H1 (cell line): ENCODE measurements at regions of chr2 and their contacts with region 1.

Region 1: GRCh38 chr2:13006829-13007717 is 290.3 kb downstream of the TRIB2 start:
- DNase-seq: peak; percentile 29 to 81
- H3K4me3 ChIP-seq: 0 out of 8 replicates have a peak overlapping the region, but pooled peaks of 1 of the 4 experiments have one; percentile 2
- H3K27ac ChIP-seq: no peak overlapping the region
- H3K4me1 ChIP-seq: peaks cover 0 to 5% (median 0%) of the 10 kb centered on the region in 4 experiments; a peak in 1 of 7 replicates
- H3K27me3 ChIP-seq: no peaks in the 10 kb centered on the region
- CTCF ChIP-seq: peak; percentile 40 to 86 (median 75)
- EP300 ChIP-seq: no peak
- POLR2A ChIP-seq: no peak
- RAD21 ChIP-seq: peak; percentile 95 to 96

Region 2: GRCh38 chr2:11829947-11830707 is 1176.9 kb before region 1 on chr2:
- CTCF ChIA-PET with region 1: interaction called, 18 read pairs
- POLR2A ChIA-PET with region 1: no interaction called
- DNase-seq: peak; percentile 73 to 78
- H3K4me3 ChIP-seq: peak overlapping the region in 1 of 4 experiments; percentile 33; a peak in 2 of 8 replicates
- H3K27ac ChIP-seq: peak overlapping the region; percentile 48; the same call in 1 of the 2 replicates
- H3K4me1 ChIP-seq: peaks cover 4 to 15% (median 8%) of the 10 kb centered on the region in 4 experiments; a peak in 6 of 7 replicates
- H3K27me3 ChIP-seq: no peaks in the 10 kb centered on the region
- CTCF ChIP-seq: peak; percentile 35 to 60 (median 56)
- EP300 ChIP-seq: no peak
- POLR2A ChIP-seq: 0 out of 3 replicates have a peak, but pooled peaks of 1 of the 2 experiments have one; percentile 19
- RAD21 ChIP-seq: peak; percentile 75 to 87

Region 3: GRCh38 chr2:12716282-12717190 is 290.5 kb before region 1 on chr2 and contains the start of gene TRIB2:
- CTCF ChIA-PET with region 1: interaction called, 16 read pairs
- POLR2A ChIA-PET with region 1: no interaction called
- DNase-seq: peak in 1 of 2 experiments; percentile 79
- H3K4me3 ChIP-seq: peak within 1 kb of the TSS; percentile 74 to 95 (median 83)
- H3K27ac ChIP-seq: peak within 1 kb of the TSS; percentile 70; the same call in 1 of the 2 replicates
- H3K4me1 ChIP-seq: peaks cover 2 to 12% (median 5%) of the 10 kb centered on the region in 4 experiments; a peak in 6 of 7 replicates
- H3K27me3 ChIP-seq: no peaks in the 10 kb centered on the region
- CTCF ChIP-seq: peak in 1 of 3 experiments; percentile 26; a peak in 1 of 4 replicates
- EP300 ChIP-seq: no peak
- POLR2A ChIP-seq: 0 out of 3 replicates have a peak, but pooled peaks of 1 of the 2 experiments have one; percentile 29
- RAD21 ChIP-seq: peak in 1 of 2 experiments; percentile 43; a peak in 1 of 4 replicates
- total RNA-seq, gene TRIB2: 57.0 and 57.3 TPM in 2 replicates

Region 4: GRCh38 chr2:12741380-12741779 is 265.7 kb before region 1 on chr2:
- CTCF ChIA-PET with region 1: interaction called, 10 read pairs
- POLR2A ChIA-PET with region 1: no interaction called
- DNase-seq: no peak
- H3K4me3 ChIP-seq: no peak overlapping the region
- H3K27ac ChIP-seq: no peak overlapping the region
- H3K4me1 ChIP-seq: no peaks in the 10 kb centered on the region
- H3K27me3 ChIP-seq: no peaks in the 10 kb centered on the region
- CTCF ChIP-seq: no peak
- EP300 ChIP-seq: no peak
- POLR2A ChIP-seq: no peak
- RAD21 ChIP-seq: no peak

Region 5: DNA sequence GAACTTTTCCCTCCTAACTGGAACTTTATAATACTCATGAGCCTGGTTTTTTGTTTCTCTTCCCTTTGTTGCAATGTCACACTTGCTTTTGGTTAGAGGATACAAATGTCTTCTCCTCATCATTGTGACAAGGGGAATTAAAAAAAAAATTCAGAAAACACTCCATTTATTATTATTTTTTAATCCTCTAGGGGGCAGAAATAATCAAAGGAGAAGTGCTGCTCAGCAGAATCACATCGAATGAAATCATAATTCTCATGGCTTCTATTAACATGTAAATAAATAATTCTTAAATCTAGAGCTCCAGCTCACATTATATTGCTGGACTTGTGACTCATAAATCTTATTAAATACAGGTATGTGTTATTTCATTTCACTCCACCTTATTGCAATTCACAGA is 16.6 kb before region 1 on chr2:
- CTCF ChIA-PET with region 1: interaction called, 14 read pairs
- POLR2A ChIA-PET with region 1: no interaction called
- DNase-seq: no peak
- H3K4me3 ChIP-seq: no peak overlapping the region
- H3K27ac ChIP-seq: no peak overlapping the region
- H3K4me1 ChIP-seq: no peaks in the 10 kb centered on the region
- H3K27me3 ChIP-seq: no peaks in the 10 kb centered on the region
- CTCF ChIP-seq: no peak
- EP300 ChIP-seq: no peak
- POLR2A ChIP-seq: no peak
- RAD21 ChIP-seq: no peak

Region 6: GRCh38 chr2:13021470-13021957 is 14.4 kb after region 1 on chr2:
- CTCF ChIA-PET with region 1: interaction called, 17 read pairs
- POLR2A ChIA-PET with region 1: no interaction called
- DNase-seq: no peak
- H3K4me3 ChIP-seq: no peak overlapping the region
- H3K27ac ChIP-seq: no peak overlapping the region
- H3K4me1 ChIP-seq: no peaks in the 10 kb centered on the region
- H3K27me3 ChIP-seq: no peaks in the 10 kb centered on the region
- CTCF ChIP-seq: no peak
- EP300 ChIP-seq: no peak
- POLR2A ChIP-seq: no peak
- RAD21 ChIP-seq: no peak

Region 7: GRCh38 chr2:13143451-13143850 is 136.4 kb after region 1 on chr2:
- CTCF ChIA-PET with region 1: no interaction called
- POLR2A ChIA-PET with region 1: no interaction called
- DNase-seq: no peak
- H3K4me3 ChIP-seq: no peak overlapping the region
- H3K27ac ChIP-seq: no peak overlapping the region
- H3K4me1 ChIP-seq: no peaks in the 10 kb centered on the region
- H3K27me3 ChIP-seq: no peaks in the 10 kb centered on the region
- CTCF ChIP-seq: no peak
- EP300 ChIP-seq: no peak
- POLR2A ChIP-seq: no peak
- RAD21 ChIP-seq: no peak